ENCODE measurements at regions of chr2 and their contacts with region 1.

Region 1: GRCh38 chr2:11802782-11803191 is 56.4 kb downstream of the LPIN1 start:
- DNase-seq: no peak
- H3K4me3 ChIP-seq: no peak overlapping the region
- H3K27me3 ChIP-seq: no peaks in the 10 kb centered on the region
- CTCF ChIP-seq: no peak

Region 2: GRCh38 chr2:11578871-11579774 is 223.7 kb before region 1 on chr2:
- CTCF ChIA-PET with region 1: no interaction called
- POLR2A ChIA-PET with region 1: no interaction called
- DNase-seq: no peak
- H3K4me3 ChIP-seq: no peak overlapping the region
- H3K27me3 ChIP-seq: peaks cover 17% of the 10 kb centered on the region
- CTCF ChIP-seq: no peak

Region 3: GRCh38 chr2:11589316-11589940 is 213.4 kb before region 1 on chr2:
- CTCF ChIA-PET with region 1: no interaction called
- POLR2A ChIA-PET with region 1: interaction called, 10 read pairs
- DNase-seq: no peak
- H3K4me3 ChIP-seq: no peak overlapping the region
- H3K27me3 ChIP-seq: no peaks in the 10 kb centered on the region
- CTCF ChIP-seq: no peak

Measured in BJ (cell line).